Ovary (tissue), 10 donors: ENCODE measurements at regions of chr5 and their contacts with region 1.

Region 1: DNA sequence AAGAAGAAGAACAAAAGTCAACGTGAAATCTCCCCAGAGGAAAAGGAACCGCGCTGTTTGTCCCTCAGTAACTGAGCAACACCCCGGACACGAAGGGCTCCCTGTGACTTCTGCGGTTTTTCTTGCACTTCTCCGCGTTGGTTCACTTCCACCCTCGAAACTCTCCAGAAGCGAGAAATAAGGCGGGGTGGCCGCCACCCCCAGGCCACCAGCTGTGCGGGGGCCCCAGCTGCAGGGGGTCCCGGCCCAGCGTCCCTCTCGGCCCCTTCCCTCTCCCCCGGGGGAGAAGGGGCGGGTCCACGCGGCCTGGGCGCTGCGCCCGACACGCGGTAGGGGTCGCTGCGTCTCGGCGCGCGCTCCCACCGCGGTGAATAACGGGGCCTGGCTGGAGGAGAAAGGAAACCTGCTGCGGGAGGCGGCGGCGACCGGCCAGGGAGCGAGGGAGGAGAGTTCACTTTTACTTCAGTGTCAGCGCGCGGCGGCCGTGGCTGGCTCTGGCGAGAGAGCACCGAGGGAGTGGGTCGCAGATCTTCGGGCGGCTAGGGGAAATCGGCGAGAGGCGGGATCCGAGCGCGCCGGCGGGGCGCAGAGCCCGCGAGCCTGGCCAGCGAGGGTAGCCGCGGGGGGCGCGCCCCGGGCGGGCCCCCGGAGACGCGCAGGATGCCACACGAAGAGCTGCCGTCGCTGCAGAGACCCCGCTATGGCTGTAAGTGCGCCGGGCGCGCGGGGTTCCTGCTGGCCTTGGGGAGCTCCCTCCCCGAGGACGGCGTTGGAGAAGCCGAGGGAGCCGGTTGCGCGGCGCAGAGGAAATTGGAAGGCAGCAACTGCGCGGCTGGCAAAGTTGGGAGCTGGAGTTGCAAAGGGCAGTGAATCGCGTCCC is at the start of gene IQGAP2:
- DNase-seq: peak; percentile 69 to 85 (median 82)
- H3K4me3 ChIP-seq: peak within 1 kb of the TSS; percentile 46
- H3K27ac ChIP-seq: peak within 1 kb of the TSS; percentile 58 to 86
- H3K4me1 ChIP-seq: peaks cover 9% of the 10 kb centered on the region
- H3K27me3 ChIP-seq: no peaks in the 10 kb centered on the region
- CTCF ChIP-seq: peak; percentile 50 to 78 (median 73)
- EP300 ChIP-seq: no peak
- POLR2A ChIP-seq: no peak
- total RNA-seq, gene IQGAP2: 9.3 to 27.6 (median 16.3) TPM

Region 2: DNA sequence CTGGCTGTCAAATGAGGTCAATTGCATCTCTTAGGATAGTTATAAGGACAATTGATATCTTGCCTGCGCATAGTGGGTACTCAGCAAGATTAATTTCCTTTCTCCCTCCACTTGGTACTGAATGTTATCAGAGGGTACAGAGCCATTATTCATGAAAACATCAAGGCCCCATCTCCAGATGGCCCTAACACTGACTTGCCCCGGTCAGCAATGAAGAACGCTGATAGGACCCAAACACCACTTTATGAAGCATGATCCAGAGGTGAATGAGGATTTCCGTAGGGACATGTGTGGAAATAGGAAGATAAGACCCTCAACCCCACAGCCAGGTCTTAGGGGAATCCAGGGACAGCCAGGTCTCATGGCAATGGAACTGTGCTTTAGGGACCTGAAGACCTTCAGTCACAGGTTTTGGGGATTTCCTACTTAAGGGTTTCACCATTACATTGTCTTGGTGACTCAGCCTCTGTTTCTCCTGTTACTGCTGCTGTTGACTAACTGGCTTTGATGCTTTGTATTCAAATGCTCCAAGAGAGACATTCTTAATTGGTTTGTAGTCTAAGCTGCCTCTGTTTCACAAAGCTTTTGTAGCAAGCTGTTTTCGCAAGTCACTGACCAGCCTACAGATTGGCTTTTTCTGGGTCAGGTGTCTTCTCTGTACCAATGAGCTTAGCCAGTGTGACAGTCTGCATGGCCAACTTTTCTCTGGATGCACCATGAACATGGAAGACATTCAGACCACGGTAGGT is 35.3 kb before region 1 on chr5:
- intact Hi-C with region 1: no loop called
- DNase-seq: no peak
- H3K4me3 ChIP-seq: no peak overlapping the region
- H3K27ac ChIP-seq: no peak overlapping the region
- H3K4me1 ChIP-seq: no peaks in the 10 kb centered on the region
- H3K27me3 ChIP-seq: no peaks in the 10 kb centered on the region
- CTCF ChIP-seq: no peak
- EP300 ChIP-seq: no peak
- POLR2A ChIP-seq: no peak

Region 3: GRCh38 chr5:76544268-76544926 is 141.3 kb after region 1 on chr5:
- intact Hi-C with region 1: loop called in 1 of 4 experiments (anchors 10 kb)
- DNase-seq: peak in 1 of 5 donors; percentile 26
- H3K4me3 ChIP-seq: no peak overlapping the region
- H3K27ac ChIP-seq: no peak overlapping the region
- H3K4me1 ChIP-seq: no peaks in the 10 kb centered on the region
- H3K27me3 ChIP-seq: no peaks in the 10 kb centered on the region
- CTCF ChIP-seq: no peak
- EP300 ChIP-seq: no peak
- POLR2A ChIP-seq: no peak

Region 4: GRCh38 chr5:76582230-76583162 is 179.4 kb after region 1 on chr5:
- intact Hi-C with region 1: loop called in 2 of 4 experiments (anchors 5 to 10 kb)
- DNase-seq: no peak
- H3K4me3 ChIP-seq: no peak overlapping the region
- H3K27ac ChIP-seq: no peak overlapping the region
- H3K4me1 ChIP-seq: no peaks in the 10 kb centered on the region
- H3K27me3 ChIP-seq: no peaks in the 10 kb centered on the region
- CTCF ChIP-seq: no peak
- EP300 ChIP-seq: no peak
- POLR2A ChIP-seq: no peak